GM10248 (cell line): ENCODE measurements at regions of chr14 and their contacts with region 1.

Region 1: GRCh38 chr14:33297565-33297964 is 358.9 kb downstream of the NPAS3 start:
- DNase-seq: no peak
- CTCF ChIP-seq: no peak

Region 2: DNA sequence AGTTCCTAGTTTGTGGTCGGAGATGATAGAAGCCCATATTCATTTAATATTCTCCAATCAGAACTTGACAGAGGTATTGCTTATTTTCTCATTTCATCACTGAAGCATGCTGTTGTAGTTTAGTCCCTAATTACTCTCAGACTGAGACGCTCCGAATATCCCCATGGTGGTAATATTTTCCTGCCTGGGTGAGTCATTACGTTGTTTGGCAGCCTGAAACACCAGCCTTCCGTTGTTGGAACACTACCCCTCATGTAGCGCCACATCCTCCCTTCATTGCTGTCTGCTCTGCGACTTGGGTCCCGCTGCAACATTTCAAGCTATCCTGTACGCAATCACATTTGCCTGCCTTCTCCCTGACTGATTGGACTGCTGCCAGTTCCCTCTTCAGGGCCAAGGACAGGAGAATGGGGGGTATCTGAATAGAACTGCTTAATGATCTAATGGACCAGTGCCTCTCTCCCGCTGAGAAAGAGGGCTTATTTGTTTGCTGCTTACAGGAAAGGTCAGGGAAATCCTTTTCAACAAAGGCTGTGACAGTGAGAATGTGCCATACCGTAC is 10.2 kb after region 1 on chr14:
- CTCF ChIA-PET with region 1: interaction called, 11 read pairs
- POLR2A ChIA-PET with region 1: no interaction called
- DNase-seq: no peak
- CTCF ChIP-seq: no peak